HCT116 (cell line): ENCODE measurements at regions of chr2 and their contacts with region 1.

Region 1: DNA sequence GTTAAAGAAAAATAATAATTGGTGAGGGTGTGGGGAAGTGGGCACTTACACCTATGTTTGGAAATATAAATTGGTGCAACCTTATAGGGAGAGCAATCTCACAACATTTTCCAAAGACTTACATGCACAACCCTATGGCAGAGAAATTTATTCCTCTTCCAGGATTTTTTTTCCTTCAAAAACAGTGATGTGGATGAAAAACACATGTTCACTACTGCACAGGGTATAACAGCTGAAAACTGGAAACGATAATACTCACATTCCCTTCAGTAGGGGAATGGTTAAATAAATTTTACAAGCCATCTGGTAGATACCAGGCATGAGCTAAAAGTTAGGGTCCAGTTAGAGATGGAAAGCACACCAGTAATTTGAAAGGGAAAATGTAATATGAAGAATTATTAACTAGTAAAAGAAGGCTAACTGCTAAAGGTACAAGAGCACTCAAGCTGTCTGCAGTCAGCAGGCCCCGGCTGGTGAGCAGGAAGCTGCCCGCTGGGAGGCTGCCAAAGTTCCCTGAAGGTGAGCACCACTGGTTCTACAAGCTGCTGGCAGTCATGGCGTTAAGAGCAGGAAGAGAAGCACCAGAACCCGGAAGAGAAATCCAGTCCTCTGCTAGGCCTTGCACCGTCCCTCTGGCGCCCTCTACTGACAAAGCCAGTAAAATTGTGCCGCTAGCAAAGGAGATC is 28.4 kb upstream of the CASP8 start:
- DNase-seq: peak; percentile 92
- ATAC-seq: peak; percentile 65
- H3K4me3 ChIP-seq: peak overlapping the region; percentile 74 to 83
- H3K27ac ChIP-seq: peak overlapping the region; percentile 26
- H3K4me1 ChIP-seq: peaks cover 15 to 22% of the 10 kb centered on the region in 2 experiments
- H3K27me3 ChIP-seq: no peaks in the 10 kb centered on the region
- CTCF ChIP-seq: peak; percentile 91 to 94 (median 91)
- POLR2A ChIP-seq: peak; percentile 66
- RAD21 ChIP-seq: peak; percentile 94

Region 2: GRCh38 chr2:200428951-200429665 is 802.8 kb before region 1 on chr2:
- CTCF ChIA-PET with region 1: no interaction called
- POLR2A ChIA-PET with region 1: no interaction called
- RAD21 ChIA-PET with region 1: no interaction called
- intact Hi-C with region 1: no loop called
- DNase-seq: no peak
- ATAC-seq: no peak
- H3K4me3 ChIP-seq: no peak overlapping the region
- H3K27ac ChIP-seq: no peak overlapping the region
- H3K4me1 ChIP-seq: 0 out of 4 replicates have a peak, but pooled peaks cover 0 to 6% of the 10 kb centered on the region in 2 experiments
- H3K27me3 ChIP-seq: no peaks in the 10 kb centered on the region
- CTCF ChIP-seq: no peak
- POLR2A ChIP-seq: no peak
- RAD21 ChIP-seq: no peak

Region 3: GRCh38 chr2:201040867-201041628 is 190.9 kb before region 1 on chr2:
- CTCF ChIA-PET with region 1: no interaction called
- POLR2A ChIA-PET with region 1: no interaction called
- RAD21 ChIA-PET with region 1: no interaction called
- intact Hi-C with region 1: no loop called
- DNase-seq: no peak
- ATAC-seq: no peak
- H3K4me3 ChIP-seq: no peak overlapping the region
- H3K27ac ChIP-seq: no peak overlapping the region
- H3K4me1 ChIP-seq: no peaks in the 10 kb centered on the region
- H3K27me3 ChIP-seq: no peaks in the 10 kb centered on the region
- CTCF ChIP-seq: no peak
- POLR2A ChIP-seq: no peak
- RAD21 ChIP-seq: no peak

Region 4: GRCh38 chr2:201071479-201072200 is 160.3 kb before region 1 on chr2 and contains the starts of genes HYCC2 and NDUFB3:
- CTCF ChIA-PET with region 1: interaction called, 7 read pairs
- POLR2A ChIA-PET with region 1: interaction called, 3 read pairs
- RAD21 ChIA-PET with region 1: no interaction called
- intact Hi-C with region 1: loop called (anchors 1 kb)
- DNase-seq: peak; percentile 92
- ATAC-seq: peak; percentile 94
- H3K4me3 ChIP-seq: peak within 1 kb of the TSS; percentile 77 to 93
- H3K27ac ChIP-seq: peak within 1 kb of the TSS; percentile 64
- H3K4me1 ChIP-seq: peaks cover 4 to 18% of the 10 kb centered on the region in 2 experiments; a peak in 3 of 4 replicates
- H3K27me3 ChIP-seq: no peaks in the 10 kb centered on the region
- CTCF ChIP-seq: 0 out of 6 replicates have a peak, but pooled peaks of 2 of the 3 experiments have one; percentile 10 to 11
- POLR2A ChIP-seq: peak; percentile 77
- RAD21 ChIP-seq: no peak
- total RNA-seq, gene HYCC2: 9.9 TPM
- total RNA-seq, gene NDUFB3: 94.6 TPM

Region 5: GRCh38 chr2:201158111-201158929 is 73.6 kb before region 1 on chr2:
- CTCF ChIA-PET with region 1: interaction called, 10 read pairs
- POLR2A ChIA-PET with region 1: no interaction called
- RAD21 ChIA-PET with region 1: no interaction called
- intact Hi-C with region 1: no loop called
- DNase-seq: peak; percentile 61
- ATAC-seq: peak; percentile 96
- H3K4me3 ChIP-seq: no peak overlapping the region
- H3K27ac ChIP-seq: peak overlapping the region; percentile 0; the same call in 1 of the 2 replicates
- H3K4me1 ChIP-seq: peaks cover 0 to 20% of the 10 kb centered on the region in 2 experiments; a peak in 2 of 4 replicates
- H3K27me3 ChIP-seq: no peaks in the 10 kb centered on the region
- CTCF ChIP-seq: peak; percentile 76 to 87 (median 82)
- POLR2A ChIP-seq: no peak
- RAD21 ChIP-seq: peak; percentile 97

Region 6: DNA sequence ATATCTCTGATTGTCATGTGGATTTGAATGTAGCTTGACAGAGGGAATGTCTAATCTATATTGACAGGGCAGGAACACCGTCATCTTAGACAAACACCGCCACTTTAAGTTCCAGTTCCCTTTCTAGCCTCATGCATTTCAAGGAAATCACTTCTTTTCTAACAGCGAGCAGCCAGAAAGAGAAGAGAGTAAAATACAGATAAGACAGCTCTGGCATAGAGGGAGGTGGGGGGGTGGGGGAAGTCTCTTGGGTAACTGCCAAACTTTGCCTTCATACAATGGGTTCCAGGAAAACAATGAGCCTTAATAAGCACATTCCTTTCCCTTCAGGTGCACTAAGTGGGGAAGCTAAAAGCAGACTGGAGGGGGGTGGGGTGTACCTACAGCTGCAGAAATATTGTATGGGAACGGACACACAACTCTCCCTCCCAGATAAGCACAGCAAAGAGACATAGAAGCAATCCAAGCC is 11.8 kb before region 1 on chr2:
- CTCF ChIA-PET with region 1: interaction called, 39 read pairs
- POLR2A ChIA-PET with region 1: no interaction called
- RAD21 ChIA-PET with region 1: no interaction called
- intact Hi-C with region 1: no loop called
- DNase-seq: no peak
- ATAC-seq: no peak
- H3K4me3 ChIP-seq: no peak overlapping the region
- H3K27ac ChIP-seq: no peak overlapping the region
- H3K4me1 ChIP-seq: peaks cover 6 to 17% of the 10 kb centered on the region in 2 experiments; a peak in 3 of 4 replicates
- H3K27me3 ChIP-seq: no peaks in the 10 kb centered on the region
- CTCF ChIP-seq: no peak
- POLR2A ChIP-seq: no peak
- RAD21 ChIP-seq: no peak

Region 7: DNA sequence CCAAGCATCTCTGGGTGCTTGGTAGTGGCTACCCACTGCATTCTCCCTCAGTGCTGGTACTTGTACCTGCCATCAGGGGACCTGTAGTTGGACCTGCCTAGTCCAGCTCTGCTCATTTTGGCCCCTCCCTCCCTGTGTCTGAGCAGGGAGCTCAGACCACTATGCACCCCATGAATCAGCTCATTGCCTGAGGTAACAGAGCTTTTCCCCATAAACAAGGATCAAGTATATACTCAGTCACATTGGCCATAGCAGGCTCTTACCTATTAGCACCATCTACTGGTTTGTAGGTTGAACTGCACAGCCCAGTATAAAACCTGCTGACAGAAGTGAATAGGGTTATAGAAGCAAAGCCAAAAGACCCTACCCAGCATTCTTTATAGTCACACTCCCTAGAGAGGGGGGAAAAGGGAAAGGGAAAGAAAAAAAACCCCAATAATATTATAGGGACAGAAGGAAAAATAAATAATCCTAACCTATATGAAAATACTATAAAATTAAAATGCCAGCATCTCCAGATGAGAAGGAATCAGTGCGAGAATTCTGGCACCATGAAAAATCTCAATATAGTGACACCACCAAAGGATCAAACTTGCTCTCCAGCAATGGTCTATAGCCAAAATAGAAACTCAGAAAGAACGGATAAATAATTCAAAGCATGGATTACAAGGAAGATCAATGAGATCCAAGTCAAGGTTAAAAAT is 132.1 kb after region 1 on chr2:
- CTCF ChIA-PET with region 1: interaction called, 16 read pairs
- POLR2A ChIA-PET with region 1: no interaction called
- RAD21 ChIA-PET with region 1: interaction called in 1 of 2 experiments, 4 read pairs
- intact Hi-C with region 1: loop called (anchors 1 kb)
- DNase-seq: peak; percentile 24
- ATAC-seq: peak; percentile 85
- H3K4me3 ChIP-seq: no peak overlapping the region
- H3K27ac ChIP-seq: no peak overlapping the region
- H3K4me1 ChIP-seq: peaks cover 9 to 20% of the 10 kb centered on the region in 2 experiments
- H3K27me3 ChIP-seq: no peaks in the 10 kb centered on the region
- CTCF ChIP-seq: peak; percentile 82 to 94 (median 91)
- POLR2A ChIP-seq: no peak
- RAD21 ChIP-seq: peak; percentile 95

Region 8: DNA sequence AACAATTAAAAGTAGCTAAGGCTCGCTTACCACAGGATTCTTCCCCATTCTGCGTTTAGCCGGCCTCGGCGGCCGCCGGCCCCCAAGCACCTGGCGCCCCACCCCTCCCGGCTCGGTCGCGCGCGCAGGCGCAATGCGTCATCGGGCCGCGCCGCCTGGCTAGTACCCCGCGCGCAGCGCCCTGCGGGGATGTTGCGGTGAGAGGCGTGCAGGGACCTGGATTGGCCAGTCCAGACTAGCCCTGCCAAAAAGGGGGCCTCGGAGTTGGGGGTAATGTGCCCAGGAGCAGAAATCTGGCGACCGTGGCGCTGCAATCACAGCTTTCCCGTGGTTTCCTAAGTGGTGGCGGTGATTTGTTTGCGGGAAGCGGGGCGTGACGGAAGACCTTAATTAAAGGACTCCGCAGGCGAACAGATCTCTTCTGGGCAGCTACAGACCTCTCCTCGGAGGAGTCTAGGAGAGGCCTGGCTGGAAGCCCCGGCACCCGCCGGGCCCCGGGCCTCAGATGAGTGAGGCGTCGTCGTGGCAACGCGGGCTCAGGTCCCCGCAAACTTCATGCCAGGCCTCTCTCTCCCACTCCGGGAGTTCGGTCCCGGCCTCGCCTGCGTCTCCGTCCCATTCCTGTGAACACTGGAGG is 410.8 kb after region 1 on chr2:
- CTCF ChIA-PET with region 1: interaction called, 5 read pairs
- POLR2A ChIA-PET with region 1: no interaction called
- RAD21 ChIA-PET with region 1: no interaction called
- intact Hi-C with region 1: loop called (anchors 5 kb)
- DNase-seq: peak; percentile 64
- ATAC-seq: peak; percentile 90
- H3K4me3 ChIP-seq: peak overlapping the region; percentile 71 to 90
- H3K27ac ChIP-seq: peak overlapping the region; percentile 64
- H3K4me1 ChIP-seq: peaks cover 4 to 13% of the 10 kb centered on the region in 2 experiments
- H3K27me3 ChIP-seq: no peaks in the 10 kb centered on the region
- CTCF ChIP-seq: no peak
- POLR2A ChIP-seq: peak; percentile 79
- RAD21 ChIP-seq: no peak

Region 9: GRCh38 chr2:201674298-201674697 is 442.4 kb after region 1 on chr2:
- CTCF ChIA-PET with region 1: no interaction called
- POLR2A ChIA-PET with region 1: no interaction called
- RAD21 ChIA-PET with region 1: no interaction called
- intact Hi-C with region 1: no loop called
- DNase-seq: no peak
- ATAC-seq: no peak
- H3K4me3 ChIP-seq: no peak overlapping the region
- H3K27ac ChIP-seq: no peak overlapping the region
- H3K4me1 ChIP-seq: no peaks in the 10 kb centered on the region
- H3K27me3 ChIP-seq: no peaks in the 10 kb centered on the region
- CTCF ChIP-seq: no peak
- POLR2A ChIP-seq: no peak
- RAD21 ChIP-seq: no peak